ENCODE measurements at regions of chr9 and their contacts with region 1.

Region 1: DNA sequence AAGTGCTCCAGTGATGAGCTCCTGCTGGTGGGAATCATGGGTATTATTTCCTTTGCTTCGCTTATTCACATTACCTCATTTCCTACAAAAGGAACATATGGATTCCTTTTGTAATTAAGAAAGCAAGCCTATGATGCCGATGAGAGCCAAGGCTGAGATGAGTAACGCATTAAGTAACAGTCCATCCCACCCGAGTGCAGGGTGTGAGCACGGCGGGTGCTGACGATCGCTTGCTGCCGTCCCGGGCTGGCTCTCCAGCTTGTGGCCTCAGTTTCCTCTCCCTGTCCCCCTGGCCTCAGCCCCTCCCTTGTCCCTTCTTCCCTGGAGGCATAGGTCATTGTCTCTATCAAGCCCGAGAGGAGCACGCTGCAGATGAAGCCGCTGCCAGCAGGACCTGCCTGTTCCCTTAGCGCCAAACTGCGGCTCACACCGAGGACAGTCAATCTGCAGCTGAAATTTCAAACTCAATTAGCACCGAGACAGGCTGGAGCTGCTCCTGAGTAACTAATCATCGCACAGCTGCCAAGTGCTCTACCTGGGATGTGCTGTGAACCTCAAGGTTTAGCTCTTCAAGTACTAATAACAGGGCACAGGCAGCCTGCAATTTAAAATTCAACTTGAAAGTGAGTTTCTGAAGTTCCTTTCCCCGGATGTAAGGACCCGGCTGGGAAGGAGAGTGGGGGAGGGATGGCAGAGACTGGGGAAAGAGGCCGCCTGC is 115.2 kb upstream of the RAPGEF1 start:
- DNase-seq: no peak

Region 2: GRCh38 chr9:130610862-130611707 is 1244.0 kb before region 1 on chr9:
- intact Hi-C with region 1: loop called in 1 of 2 experiments (anchors 10 kb)
- DNase-seq: no peak

Region 3: DNA sequence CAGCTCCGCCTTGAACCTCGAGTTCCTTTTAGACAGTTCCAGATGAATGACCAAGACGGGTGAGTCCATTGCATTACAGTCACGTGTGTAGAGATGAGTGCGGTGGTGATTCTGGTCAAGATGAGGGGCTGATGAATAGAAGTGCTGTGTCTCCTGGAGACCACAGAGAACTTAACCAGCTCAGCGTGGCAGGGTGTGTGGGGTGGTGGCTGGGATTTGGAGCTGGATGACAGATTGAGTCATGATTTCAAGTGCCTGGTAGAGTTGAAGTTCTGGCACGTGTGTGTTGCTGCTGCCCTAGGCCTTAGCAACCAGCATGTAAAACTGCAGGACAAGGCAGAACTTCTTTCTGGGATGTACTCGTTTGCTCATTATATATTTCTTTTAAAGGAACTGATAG is 407.9 kb before region 1 on chr9:
- intact Hi-C with region 1: no loop called
- DNase-seq: peak; percentile 28

Region 4: DNA sequence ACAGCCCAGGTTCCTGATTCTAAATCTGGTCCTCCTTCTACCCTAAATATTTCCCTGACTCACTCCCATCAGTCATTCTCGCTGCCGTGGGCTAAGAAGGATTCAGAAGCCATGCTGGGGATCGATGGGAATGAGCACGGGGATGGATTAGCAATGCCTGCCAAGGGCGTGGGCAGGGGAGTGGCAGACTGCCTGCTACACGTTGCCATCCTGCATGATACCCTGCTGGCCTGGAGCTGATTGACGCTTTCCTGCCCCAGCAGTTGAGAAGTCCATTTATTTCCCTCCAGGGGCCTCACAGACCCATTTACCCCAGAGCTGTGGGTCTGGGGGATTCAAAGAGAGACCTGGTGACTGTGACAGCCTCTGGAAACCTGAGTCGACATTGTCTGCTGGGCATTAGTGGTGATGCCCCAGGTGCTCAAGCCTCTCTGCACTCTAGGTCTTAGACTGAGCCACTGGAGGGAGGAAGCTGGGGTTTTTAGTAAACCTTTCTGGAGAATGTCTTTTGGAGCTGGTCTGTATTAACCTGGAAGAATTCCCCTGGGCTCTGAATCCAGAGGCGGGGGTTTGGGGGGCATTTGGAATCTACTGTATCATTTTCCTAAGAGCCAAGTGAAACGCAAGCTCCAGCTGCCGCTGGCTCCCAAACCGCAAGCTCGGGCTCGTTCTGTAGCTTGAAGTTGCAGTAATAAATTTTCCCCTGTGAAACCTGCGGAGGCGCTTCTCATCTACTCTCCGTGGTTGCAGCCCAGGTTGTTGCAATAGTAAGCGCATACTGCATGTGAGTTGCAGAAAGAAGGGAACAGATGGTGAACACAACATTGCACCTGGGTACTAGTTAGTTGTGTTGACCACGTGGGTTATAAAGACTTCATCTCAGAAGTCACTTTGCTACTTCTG is 38.8 kb before region 1 on chr9:
- intact Hi-C with region 1: loop called in 1 of 2 experiments (anchors 1 kb)
- DNase-seq: peak; percentile 63

Region 5: GRCh38 chr9:132268725-132269352 is 413.8 kb after region 1 on chr9:
- intact Hi-C with region 1: no loop called
- DNase-seq: peak; percentile 86

Measured in posterior vena cava (tissue), 2 donors.